CD4-positive, alpha-beta memory T cell (primary cell): ENCODE measurements at regions of chr19 and their contacts with region 1.

Region 1: DNA sequence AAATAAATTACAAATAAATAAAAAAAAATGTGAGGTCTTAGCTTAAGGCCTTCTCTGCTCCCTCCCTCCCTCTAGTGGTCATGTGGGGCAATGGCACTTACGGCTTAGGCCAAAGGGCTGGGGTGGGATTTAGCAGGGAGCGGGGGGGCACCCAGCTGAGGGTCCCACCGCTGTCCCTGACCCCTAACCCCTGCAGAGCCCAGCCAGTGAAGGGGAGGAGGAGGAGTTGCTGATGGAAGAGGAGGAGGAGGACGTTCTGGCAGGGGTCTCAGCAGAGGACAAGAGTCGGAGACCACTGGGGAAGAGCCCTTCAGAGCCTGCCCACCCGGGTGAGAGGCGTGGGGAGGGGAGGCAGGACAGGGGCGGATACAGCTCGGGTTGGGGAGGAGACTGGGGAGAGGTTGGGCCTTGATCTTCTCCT is 9.3 kb downstream of the MPND start:
- DNase-seq: peak; percentile 55 to 62 (median 61)
- H3K4me3 ChIP-seq: no peak overlapping the region
- H3K4me3 Mint-ChIP-seq: no peak overlapping the region
- H3K27ac ChIP-seq: no peak overlapping the region
- H3K27ac Mint-ChIP-seq: peak overlapping the region in 6 of 7 donors; percentile 52 to 88 (median 78)
- H3K4me1 ChIP-seq: no peaks in the 10 kb centered on the region
- H3K4me1 Mint-ChIP-seq: peaks cover 0 to 3% (median 1%) of the 10 kb centered on the region in 4 donors
- H3K27me3 ChIP-seq: no peaks in the 10 kb centered on the region
- H3K27me3 Mint-ChIP-seq: no peaks in the 10 kb centered on the region

Region 2: DNA sequence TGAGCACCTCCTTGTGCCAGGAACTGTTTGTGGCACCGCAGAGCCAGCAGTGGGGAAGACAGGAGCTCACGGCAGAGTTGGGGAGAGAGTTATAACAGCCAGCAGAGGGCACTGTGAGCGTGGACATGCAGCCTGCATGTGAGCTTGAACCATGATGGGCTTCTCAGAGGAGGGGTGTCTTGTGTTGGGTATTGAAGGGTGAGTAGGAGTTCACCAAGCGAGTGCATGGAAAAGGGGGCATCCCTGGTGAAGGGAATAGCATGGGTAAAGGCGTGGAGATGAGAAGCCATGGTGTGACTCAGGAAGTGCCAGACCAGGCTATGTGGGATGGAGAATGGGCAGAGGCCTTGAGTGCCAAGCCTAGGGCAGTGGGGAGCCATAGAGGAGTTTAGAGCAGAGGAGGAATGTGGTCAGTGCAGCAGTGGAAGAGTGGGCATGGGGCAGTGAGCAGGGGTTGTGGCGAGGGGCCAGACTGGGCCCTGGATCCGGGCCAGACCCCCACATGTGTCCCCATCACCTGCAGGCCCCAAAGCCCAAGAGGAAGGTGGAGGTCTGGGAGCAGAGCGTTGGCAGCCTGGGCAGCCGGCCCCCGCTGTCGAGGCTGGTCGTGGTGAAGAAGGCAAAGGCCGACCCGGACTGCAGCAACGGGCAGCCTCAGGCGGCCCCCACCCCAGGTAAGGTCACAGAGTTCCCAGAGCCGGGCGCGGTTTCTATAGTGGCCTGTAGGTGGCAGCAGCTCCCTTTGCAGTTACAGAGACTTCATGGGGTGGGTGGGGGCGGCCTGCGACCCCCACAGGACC is 85.4 kb before region 1 on chr19:
- CTCF ChIA-PET with region 1: interaction called, 61 read pairs
- POLR2A ChIA-PET with region 1: interaction called, 11 read pairs
- intact Hi-C with region 1: loop called (anchors 1 kb)
- DNase-seq: peak; percentile 41 to 57 (median 46)
- H3K4me3 ChIP-seq: no peak overlapping the region
- H3K4me3 Mint-ChIP-seq: no peak overlapping the region
- H3K27ac ChIP-seq: no peak overlapping the region
- H3K27ac Mint-ChIP-seq: peak overlapping the region in 6 of 7 donors; percentile 22 to 93 (median 76)
- H3K4me1 ChIP-seq: peaks cover 7% of the 10 kb centered on the region
- H3K4me1 Mint-ChIP-seq: peaks cover 12 to 19% (median 15%) of the 10 kb centered on the region in 4 donors
- H3K27me3 ChIP-seq: no peaks in the 10 kb centered on the region
- H3K27me3 Mint-ChIP-seq: no peaks in the 10 kb centered on the region

Region 3: DNA sequence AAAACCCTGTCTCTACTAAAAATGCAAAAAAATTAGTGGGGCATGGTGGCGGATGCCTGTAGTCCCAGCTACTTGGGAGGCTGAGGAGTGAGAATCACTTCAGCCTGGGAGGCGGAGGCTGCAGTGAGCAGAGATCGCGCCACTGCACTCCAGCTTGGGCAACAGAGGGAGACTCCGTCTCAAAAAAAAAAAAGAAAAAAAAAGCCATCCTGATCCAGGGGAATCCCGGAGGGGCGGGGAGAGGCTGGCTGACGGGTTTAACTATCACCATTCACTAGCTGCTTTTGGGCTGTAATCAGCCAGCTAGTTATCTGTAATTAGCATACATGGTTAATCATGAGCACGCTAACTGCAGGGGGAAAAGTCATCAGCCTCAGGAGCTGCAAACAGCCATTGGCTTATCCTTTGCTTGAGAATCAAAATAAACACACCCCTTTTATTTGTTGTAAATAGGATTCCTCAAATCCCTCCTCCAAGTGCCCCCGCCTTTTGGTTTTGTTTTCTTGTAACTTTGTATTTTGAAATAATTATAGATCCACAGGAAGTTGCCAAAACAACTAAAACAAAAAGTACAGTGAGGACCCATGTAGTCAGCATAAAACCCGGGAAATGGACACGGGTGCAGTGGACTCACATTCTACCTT is 38.7 kb before region 1 on chr19:
- CTCF ChIA-PET with region 1: interaction called, 29 read pairs
- POLR2A ChIA-PET with region 1: no interaction called
- intact Hi-C with region 1: no loop called
- DNase-seq: no peak
- H3K4me3 ChIP-seq: no peak overlapping the region
- H3K4me3 Mint-ChIP-seq: no peak overlapping the region
- H3K27ac ChIP-seq: no peak overlapping the region
- H3K27ac Mint-ChIP-seq: no peak overlapping the region
- H3K4me1 ChIP-seq: no peaks in the 10 kb centered on the region
- H3K4me1 Mint-ChIP-seq: no peaks in the 10 kb centered on the region
- H3K27me3 ChIP-seq: no peaks in the 10 kb centered on the region
- H3K27me3 Mint-ChIP-seq: no peaks in the 10 kb centered on the region

Region 4: DNA sequence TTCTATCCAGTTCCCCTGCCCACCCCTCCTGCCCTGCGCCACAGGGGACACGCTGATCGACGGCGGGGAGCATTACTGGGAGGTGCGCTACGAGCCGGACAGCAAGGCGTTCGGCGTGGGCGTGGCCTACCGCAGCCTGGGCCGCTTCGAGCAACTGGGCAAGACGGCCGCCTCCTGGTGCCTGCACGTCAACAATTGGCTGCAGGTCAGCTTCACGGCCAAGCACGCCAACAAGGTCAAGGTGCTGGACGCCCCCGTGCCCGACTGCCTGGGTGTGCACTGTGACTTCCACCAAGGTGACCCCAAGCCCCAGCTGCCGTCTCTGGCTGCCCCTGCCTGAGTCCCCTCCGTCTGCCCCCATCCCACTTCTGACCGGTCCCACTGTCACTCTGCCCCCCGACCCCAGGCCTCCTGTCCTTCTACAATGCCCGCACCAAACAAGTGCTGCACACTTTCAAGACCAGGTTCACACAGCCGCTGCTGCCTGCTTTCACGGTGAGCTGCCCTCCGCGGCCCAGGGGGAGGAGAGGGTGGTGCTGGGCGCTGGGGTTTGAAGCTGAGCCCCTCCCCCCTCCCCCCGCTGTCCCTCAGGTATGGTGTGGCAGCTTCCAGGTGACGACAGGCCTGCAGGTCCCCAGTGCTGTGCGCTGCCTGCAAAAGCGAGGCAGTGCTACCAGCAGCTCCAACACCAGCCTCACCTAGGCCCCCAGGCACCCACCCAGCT is 29.6 kb before region 1 on chr19:
- CTCF ChIA-PET with region 1: interaction called, 29 read pairs
- POLR2A ChIA-PET with region 1: no interaction called
- intact Hi-C with region 1: no loop called
- DNase-seq: no peak
- H3K4me3 ChIP-seq: no peak overlapping the region
- H3K4me3 Mint-ChIP-seq: no peak overlapping the region
- H3K27ac ChIP-seq: no peak overlapping the region
- H3K27ac Mint-ChIP-seq: no peak overlapping the region
- H3K4me1 ChIP-seq: peaks cover 15% of the 10 kb centered on the region
- H3K4me1 Mint-ChIP-seq: peaks cover 8 to 18% (median 15%) of the 10 kb centered on the region in 4 donors
- H3K27me3 ChIP-seq: no peaks in the 10 kb centered on the region
- H3K27me3 Mint-ChIP-seq: no peaks in the 10 kb centered on the region

Region 5: DNA sequence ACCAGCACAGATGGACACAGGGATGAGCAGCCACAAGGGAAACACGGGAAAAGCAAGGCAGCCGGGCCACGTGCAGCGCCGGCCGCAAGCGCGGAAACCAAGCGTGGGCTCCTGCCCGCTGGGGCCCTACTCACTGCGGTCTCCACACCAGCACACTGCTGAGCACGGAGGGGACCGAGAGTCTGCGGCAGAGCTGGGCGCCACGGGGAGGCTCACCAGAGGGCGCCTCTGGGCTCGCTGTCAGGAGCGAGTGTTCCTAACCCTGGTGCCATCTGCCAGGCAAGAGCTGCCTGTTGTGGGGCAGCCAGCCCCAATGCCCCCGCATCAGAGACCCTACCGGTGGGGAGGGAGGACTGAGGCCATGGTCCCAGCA is 17.2 kb after region 1 on chr19:
- CTCF ChIA-PET with region 1: interaction called, 18 read pairs
- POLR2A ChIA-PET with region 1: interaction called, 4 read pairs
- intact Hi-C with region 1: no loop called
- DNase-seq: peak; percentile 69 to 78 (median 71)
- H3K4me3 ChIP-seq: peak overlapping the region; percentile 51 to 69
- H3K4me3 Mint-ChIP-seq: peak overlapping the region; percentile 79 to 97 (median 92)
- H3K27ac ChIP-seq: peak overlapping the region; percentile 87
- H3K27ac Mint-ChIP-seq: peak overlapping the region; percentile 92 to 97 (median 95)
- H3K4me1 ChIP-seq: peaks cover 67% of the 10 kb centered on the region
- H3K4me1 Mint-ChIP-seq: peaks cover 14 to 54% (median 30%) of the 10 kb centered on the region in 4 donors
- H3K27me3 ChIP-seq: no peaks in the 10 kb centered on the region
- H3K27me3 Mint-ChIP-seq: no peaks in the 10 kb centered on the region

Region 6: GRCh38 chr19:4375164-4376027 is 22.7 kb after region 1 on chr19:
- CTCF ChIA-PET with region 1: interaction called, 15 read pairs
- POLR2A ChIA-PET with region 1: no interaction called
- intact Hi-C with region 1: loop called (anchors 1 kb)
- DNase-seq: no peak
- H3K4me3 ChIP-seq: no peak overlapping the region
- H3K4me3 Mint-ChIP-seq: peak overlapping the region in 1 of 8 donors; percentile 15
- H3K27ac ChIP-seq: no peak overlapping the region
- H3K27ac Mint-ChIP-seq: peak overlapping the region in 6 of 7 donors; percentile 29 to 85 (median 63)
- H3K4me1 ChIP-seq: peaks cover 95% of the 10 kb centered on the region
- H3K4me1 Mint-ChIP-seq: peaks cover 19 to 73% (median 48%) of the 10 kb centered on the region in 4 donors
- H3K27me3 ChIP-seq: no peaks in the 10 kb centered on the region
- H3K27me3 Mint-ChIP-seq: no peaks in the 10 kb centered on the region